K562 (cell line): ENCODE measurements at regions of chr19 and their contacts with region 1.

Region 1: GRCh38 chr19:49746206-49747091 is 16.7 kb downstream of the TSKS start:
- DNase-seq: peak; percentile 98 to 100 (median 100)
- ATAC-seq: peak; percentile 98
- H3K4me3 ChIP-seq: peak overlapping the region; percentile 35
- H3K27ac ChIP-seq: peak overlapping the region; percentile 76
- H3K4me1 ChIP-seq: peaks cover 11 to 31% of the 10 kb centered on the region in 2 experiments
- H3K27me3 ChIP-seq: no peaks in the 10 kb centered on the region
- CTCF ChIP-seq: peak; percentile 28 to 58 (median 39); a peak in 4 of 6 replicates
- EP300 ChIP-seq: no peak
- POLR2A ChIP-seq: peak; percentile 67
- RAD21 ChIP-seq: peak in 1 of 2 experiments; percentile 29; a peak in 2 of 4 replicates

Region 2: DNA sequence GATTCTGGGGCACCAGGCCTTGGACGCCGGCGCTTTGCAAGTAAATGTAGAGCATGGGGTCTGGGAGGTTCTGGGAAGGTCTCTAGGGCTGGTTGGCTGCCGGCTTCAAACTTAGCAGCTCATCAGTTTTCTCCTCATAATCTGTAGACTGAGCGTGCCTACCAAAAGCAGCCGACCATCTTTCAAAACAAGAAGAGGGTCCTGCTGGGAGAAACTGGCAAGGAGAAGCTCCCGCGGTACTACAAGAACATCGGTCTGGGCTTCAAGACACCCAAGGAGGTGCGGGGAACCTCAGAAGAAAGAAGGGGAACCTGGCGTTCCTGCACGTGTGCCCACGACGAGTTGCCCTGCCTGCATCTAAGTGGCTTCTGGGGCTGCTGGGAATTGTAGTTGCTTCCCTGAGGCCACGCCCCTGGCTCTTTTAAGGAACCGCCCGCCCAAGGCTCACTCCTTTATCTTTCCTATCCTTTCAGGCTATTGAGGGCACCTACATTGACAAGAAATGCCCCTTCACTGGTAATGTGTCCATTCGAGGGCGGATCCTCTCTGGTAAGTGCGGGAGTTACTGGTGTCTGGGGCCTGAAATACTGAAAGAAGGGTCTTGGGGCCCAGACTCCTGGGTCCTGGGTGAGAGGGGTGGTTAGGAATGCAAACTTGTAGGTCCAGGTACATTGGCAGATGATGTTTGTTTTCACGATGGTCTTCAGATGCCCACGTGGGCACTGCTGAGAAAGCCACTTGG is 249.2 kb before region 1 on chr19:
- CTCF ChIA-PET with region 1: no interaction called
- POLR2A ChIA-PET with region 1: no interaction called
- in situ Hi-C with region 1: no loop called
- intact Hi-C with region 1: no loop called
- DNase-seq: peak; percentile 47 to 89 (median 63)
- ATAC-seq: peak; percentile 37
- H3K4me3 ChIP-seq: peak overlapping the region; percentile 89
- H3K27ac ChIP-seq: peak overlapping the region; percentile 94
- H3K4me1 ChIP-seq: peaks cover 33 to 44% of the 10 kb centered on the region in 2 experiments; a peak in 4 of 5 replicates
- H3K27me3 ChIP-seq: no peaks in the 10 kb centered on the region
- CTCF ChIP-seq: no peak
- EP300 ChIP-seq: no peak
- POLR2A ChIP-seq: peak; percentile 68
- RAD21 ChIP-seq: no peak

Region 3: DNA sequence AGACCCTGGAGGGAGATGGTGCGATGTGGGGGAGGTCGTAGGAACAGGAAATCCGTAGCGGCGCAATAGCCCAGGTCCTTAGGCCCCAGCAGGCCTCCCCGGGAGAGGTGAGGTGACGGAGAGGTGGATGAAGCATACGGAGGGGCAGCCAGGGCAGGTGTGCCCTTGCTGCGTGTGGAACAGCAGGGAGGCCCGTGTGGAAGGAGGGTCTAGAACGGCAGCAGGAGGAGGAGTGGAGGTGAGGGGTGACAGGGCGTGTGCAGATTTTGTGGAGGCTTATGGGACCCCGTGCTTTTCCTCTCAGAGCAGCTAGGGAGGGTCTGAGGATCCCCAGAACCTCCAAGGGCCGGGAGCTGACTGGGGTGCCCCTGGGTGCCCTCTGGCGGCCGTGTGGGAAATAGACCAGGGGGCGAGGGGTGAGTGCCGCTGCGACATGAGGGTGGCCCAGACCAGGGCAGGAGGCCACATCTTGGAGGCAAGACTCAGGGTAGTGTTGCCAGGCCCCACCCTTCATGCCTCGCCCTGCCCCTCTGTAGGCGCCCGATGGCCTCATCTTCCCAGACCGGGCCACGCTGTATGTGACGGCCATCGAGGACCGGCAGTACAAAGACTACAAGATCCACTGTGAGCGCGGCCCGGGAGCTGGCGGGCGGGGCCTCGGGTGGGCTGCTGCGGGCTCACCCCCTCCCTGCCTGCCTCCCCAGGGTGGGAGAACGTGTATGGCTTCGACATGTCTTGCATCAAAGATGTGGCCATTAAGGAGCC is 62.0 kb before region 1 on chr19:
- CTCF ChIA-PET with region 1: no interaction called
- POLR2A ChIA-PET with region 1: no interaction called
- in situ Hi-C with region 1: no loop called
- intact Hi-C with region 1: no loop called
- DNase-seq: peak in 2 of 4 experiments; percentile 37 to 50
- ATAC-seq: peak; percentile 68
- H3K4me3 ChIP-seq: no peak overlapping the region
- H3K27ac ChIP-seq: no peak overlapping the region
- H3K4me1 ChIP-seq: peaks cover 16 to 70% of the 10 kb centered on the region in 2 experiments
- H3K27me3 ChIP-seq: no peaks in the 10 kb centered on the region
- CTCF ChIP-seq: peak; percentile 59 to 69 (median 63)
- EP300 ChIP-seq: no peak
- POLR2A ChIP-seq: peak; percentile 73
- RAD21 ChIP-seq: peak in 1 of 2 experiments; percentile 35; a peak in 2 of 4 replicates

Region 4: DNA sequence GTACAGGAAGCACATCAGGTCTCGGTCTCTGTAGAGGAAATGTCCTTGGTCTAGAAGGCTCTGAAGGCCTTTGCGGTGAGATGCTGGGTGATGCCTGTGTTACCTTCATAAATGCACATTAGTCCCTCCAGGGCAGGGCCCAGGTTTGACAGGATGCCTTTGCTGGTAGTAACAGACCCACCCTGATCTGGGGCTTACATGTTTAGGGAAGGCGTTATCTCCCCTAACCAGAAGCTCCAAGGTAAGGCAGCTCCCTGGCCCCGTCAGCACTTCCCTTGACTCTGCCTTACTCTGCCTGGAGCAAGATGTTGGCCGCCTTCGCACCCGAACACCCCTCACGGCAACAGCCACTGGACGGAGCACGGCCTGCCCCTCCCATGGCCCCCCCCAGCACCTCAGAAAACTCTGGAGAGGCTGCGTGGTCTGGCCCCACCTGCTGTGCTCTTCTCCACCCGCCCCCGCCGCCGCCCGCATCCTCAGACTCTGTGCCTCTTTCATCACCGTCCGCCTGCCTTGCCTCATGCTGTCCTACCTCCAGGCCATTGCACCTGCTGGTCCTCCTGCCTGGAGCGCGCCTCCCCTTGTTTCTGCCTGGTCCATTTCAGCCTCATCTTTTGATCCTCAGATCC is 29.4 kb after region 1 on chr19:
- CTCF ChIA-PET with region 1: no interaction called
- POLR2A ChIA-PET with region 1: no interaction called
- in situ Hi-C with region 1: no loop called
- intact Hi-C with region 1: loop called (anchors 2 kb)
- DNase-seq: peak; percentile 87 to 95 (median 90)
- ATAC-seq: peak; percentile 91
- H3K4me3 ChIP-seq: no peak overlapping the region
- H3K27ac ChIP-seq: peak overlapping the region; percentile 69
- H3K4me1 ChIP-seq: peaks cover 39 to 65% of the 10 kb centered on the region in 2 experiments
- H3K27me3 ChIP-seq: no peaks in the 10 kb centered on the region
- CTCF ChIP-seq: no peak
- EP300 ChIP-seq: peak; percentile 75
- POLR2A ChIP-seq: no peak
- RAD21 ChIP-seq: no peak